IMR-90 (cell line): ENCODE measurements at regions of chr5 and their contacts with region 1.

Region 1: GRCh38 chr5:171418316-171418981 is 998 bp upstream of the FGF18 start:
- DNase-seq: peak; percentile 82
- ATAC-seq: peak; percentile 89
- H3K4me3 ChIP-seq: peak overlapping the region; percentile 3; the same call in 1 of the 2 replicates
- H3K27ac ChIP-seq: no peak overlapping the region
- H3K4me1 ChIP-seq: peaks cover 2% of the 10 kb centered on the region; the same call in 1 of the 2 replicates
- H3K27me3 ChIP-seq: no peaks in the 10 kb centered on the region; the same call in 1 of the 2 replicates
- CTCF ChIP-seq: peak; percentile 95
- POLR2A ChIP-seq: peak; percentile 39; the same call in 1 of the 2 replicates
- RAD21 ChIP-seq: peak; percentile 95

Region 2: DNA sequence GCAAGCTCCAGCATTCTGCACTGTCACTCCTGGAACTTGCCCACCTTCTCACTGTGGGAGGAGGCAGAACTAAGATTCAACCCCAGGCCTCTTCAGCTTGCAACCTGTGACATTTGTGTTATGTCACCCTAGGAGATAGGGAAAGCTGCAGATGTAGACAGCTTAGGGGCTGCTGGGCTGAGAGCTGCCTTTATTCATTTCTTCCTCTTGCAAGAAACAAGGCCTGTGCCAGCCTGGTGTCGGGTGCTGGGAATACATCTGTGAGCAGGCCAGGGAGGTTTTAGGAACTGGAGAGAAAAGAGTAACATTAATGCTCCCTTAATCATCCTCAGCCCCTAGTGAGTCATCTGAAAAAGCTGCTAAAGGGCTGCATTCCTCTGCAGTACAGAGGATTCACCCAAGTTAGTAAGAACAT is 102.8 kb after region 1 on chr5:
- CTCF ChIA-PET with region 1: interaction called, 3 read pairs
- POLR2A ChIA-PET with region 1: no interaction called
- dilution Hi-C with region 1: no loop called
- in situ Hi-C with region 1: no loop called
- intact Hi-C with region 1: loop called (anchors 5 kb)
- DNase-seq: peak; percentile 92
- ATAC-seq: peak; percentile 95
- H3K4me3 ChIP-seq: no peak overlapping the region
- H3K27ac ChIP-seq: peak overlapping the region; percentile 81
- H3K4me1 ChIP-seq: peaks cover 23% of the 10 kb centered on the region
- H3K27me3 ChIP-seq: peaks cover 3% of the 10 kb centered on the region
- CTCF ChIP-seq: peak; percentile 20; the same call in 1 of the 2 replicates
- POLR2A ChIP-seq: no peak
- RAD21 ChIP-seq: peak; percentile 44

Region 3: GRCh38 chr5:171580502-171581265 is 162.2 kb after region 1 on chr5:
- CTCF ChIA-PET with region 1: no interaction called
- POLR2A ChIA-PET with region 1: no interaction called
- dilution Hi-C with region 1: no loop called
- in situ Hi-C with region 1: no loop called
- intact Hi-C with region 1: no loop called
- DNase-seq: peak; percentile 52
- ATAC-seq: peak; percentile 69
- H3K4me3 ChIP-seq: no peak overlapping the region
- H3K27ac ChIP-seq: no peak overlapping the region
- H3K4me1 ChIP-seq: no peaks in the 10 kb centered on the region
- H3K27me3 ChIP-seq: peaks cover 19% of the 10 kb centered on the region
- CTCF ChIP-seq: no peak
- POLR2A ChIP-seq: no peak
- RAD21 ChIP-seq: no peak

Region 4: DNA sequence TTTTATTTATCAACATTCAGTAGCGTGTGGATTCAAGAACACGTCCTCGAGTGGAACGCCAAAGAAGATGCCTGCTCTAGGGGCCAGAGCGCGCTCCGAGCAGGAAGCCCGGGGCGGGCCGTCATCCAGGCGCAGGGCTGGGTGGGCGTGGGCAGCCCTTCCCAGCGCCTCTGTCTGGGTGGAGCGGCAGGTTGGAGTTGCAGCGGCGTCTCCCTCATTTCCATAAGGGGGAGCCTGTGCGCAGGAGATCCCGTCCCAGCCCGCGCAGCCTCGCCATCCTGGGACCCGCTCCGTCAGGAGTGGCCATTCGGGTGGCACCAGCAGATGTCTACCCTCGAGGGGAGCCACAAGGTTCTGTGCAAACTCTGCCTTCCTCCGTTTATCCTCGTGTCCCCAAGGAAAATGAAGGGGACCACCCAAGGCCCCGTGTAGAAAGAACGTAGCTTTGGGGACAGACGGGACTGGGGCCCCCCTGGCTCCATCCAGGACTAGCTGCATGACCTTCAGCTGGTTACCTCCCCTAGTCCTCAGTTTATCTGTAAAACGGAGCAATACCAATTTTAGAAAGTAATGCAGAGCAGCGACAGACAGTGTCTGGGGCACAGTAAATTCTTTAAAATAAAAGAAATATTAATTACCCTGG is 211.7 kb after region 1 on chr5:
- CTCF ChIA-PET with region 1: interaction called, 3 read pairs
- POLR2A ChIA-PET with region 1: no interaction called
- dilution Hi-C with region 1: no loop called
- in situ Hi-C with region 1: no loop called
- intact Hi-C with region 1: loop called (anchors 1 kb)
- DNase-seq: peak; percentile 52
- ATAC-seq: peak; percentile 99
- H3K4me3 ChIP-seq: no peak overlapping the region
- H3K27ac ChIP-seq: no peak overlapping the region
- H3K4me1 ChIP-seq: no peaks in the 10 kb centered on the region
- H3K27me3 ChIP-seq: peaks cover 51% of the 10 kb centered on the region
- CTCF ChIP-seq: peak; percentile 63
- POLR2A ChIP-seq: no peak
- RAD21 ChIP-seq: peak; percentile 73

Region 5: DNA sequence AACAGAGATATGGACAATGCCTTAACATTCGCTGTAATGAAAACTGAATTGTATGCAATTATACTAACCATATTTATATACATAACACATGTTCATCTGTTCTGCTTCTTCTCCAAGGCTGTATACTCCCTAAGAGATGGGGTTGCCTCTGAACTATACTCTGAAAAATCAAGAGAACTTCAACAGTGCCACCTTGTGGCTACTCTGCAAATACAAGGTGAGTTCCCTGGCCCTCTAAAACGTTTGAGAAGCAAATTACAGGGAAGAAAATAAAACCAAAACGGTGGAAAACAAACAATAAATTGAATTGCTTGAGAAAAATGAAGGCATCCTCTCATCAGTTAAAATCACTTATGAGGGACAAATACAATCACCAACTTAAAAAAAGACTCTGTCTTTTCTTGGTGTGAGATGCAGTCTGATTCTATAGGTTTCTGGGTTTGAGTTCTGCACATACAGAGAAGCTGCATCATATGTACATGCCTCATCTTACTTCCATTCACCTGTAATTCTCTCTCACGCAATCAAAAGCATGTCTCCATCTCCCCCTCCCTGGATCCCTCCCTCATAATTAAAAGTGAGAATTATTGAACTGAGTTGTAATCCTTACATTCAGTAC is 489.4 kb after region 1 on chr5:
- CTCF ChIA-PET with region 1: interaction called, 13 read pairs
- POLR2A ChIA-PET with region 1: no interaction called
- dilution Hi-C with region 1: no loop called
- in situ Hi-C with region 1: loop called (anchors 5 kb)
- intact Hi-C with region 1: loop called (anchors 1 kb)
- DNase-seq: peak; percentile 72
- ATAC-seq: peak; percentile 92
- H3K4me3 ChIP-seq: no peak overlapping the region
- H3K27ac ChIP-seq: no peak overlapping the region
- H3K4me1 ChIP-seq: no peaks in the 10 kb centered on the region
- H3K27me3 ChIP-seq: no peaks in the 10 kb centered on the region
- CTCF ChIP-seq: peak; percentile 76
- POLR2A ChIP-seq: no peak
- RAD21 ChIP-seq: peak; percentile 75

Region 6: DNA sequence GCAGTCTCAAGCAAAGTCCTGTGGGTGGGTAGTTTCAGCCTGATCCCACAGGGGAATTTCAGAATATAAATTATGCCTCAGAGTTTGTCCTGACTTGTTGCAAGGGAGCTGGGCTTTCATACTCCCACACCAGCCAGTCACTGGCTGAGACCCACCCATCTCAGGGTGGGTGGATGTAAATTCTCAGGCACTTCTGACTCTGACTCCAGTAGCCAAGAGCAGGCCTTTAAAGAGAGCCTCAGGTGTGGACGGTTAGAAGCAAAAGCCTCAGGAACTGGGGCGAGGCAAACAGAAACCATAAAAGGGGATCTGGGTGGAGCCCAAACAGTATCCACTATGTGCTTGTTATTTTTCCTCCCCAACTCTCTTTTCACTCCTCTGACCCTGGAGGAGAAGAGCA is 616.6 kb after region 1 on chr5:
- CTCF ChIA-PET with region 1: no interaction called
- POLR2A ChIA-PET with region 1: no interaction called
- dilution Hi-C with region 1: no loop called
- in situ Hi-C with region 1: loop called (anchors 10 kb)
- intact Hi-C with region 1: loop called (anchors 2 kb)
- DNase-seq: no peak
- ATAC-seq: no peak
- H3K4me3 ChIP-seq: no peak overlapping the region
- H3K27ac ChIP-seq: no peak overlapping the region
- H3K4me1 ChIP-seq: no peaks in the 10 kb centered on the region
- H3K27me3 ChIP-seq: no peaks in the 10 kb centered on the region
- CTCF ChIP-seq: no peak
- POLR2A ChIP-seq: no peak
- RAD21 ChIP-seq: no peak

Region 7: DNA sequence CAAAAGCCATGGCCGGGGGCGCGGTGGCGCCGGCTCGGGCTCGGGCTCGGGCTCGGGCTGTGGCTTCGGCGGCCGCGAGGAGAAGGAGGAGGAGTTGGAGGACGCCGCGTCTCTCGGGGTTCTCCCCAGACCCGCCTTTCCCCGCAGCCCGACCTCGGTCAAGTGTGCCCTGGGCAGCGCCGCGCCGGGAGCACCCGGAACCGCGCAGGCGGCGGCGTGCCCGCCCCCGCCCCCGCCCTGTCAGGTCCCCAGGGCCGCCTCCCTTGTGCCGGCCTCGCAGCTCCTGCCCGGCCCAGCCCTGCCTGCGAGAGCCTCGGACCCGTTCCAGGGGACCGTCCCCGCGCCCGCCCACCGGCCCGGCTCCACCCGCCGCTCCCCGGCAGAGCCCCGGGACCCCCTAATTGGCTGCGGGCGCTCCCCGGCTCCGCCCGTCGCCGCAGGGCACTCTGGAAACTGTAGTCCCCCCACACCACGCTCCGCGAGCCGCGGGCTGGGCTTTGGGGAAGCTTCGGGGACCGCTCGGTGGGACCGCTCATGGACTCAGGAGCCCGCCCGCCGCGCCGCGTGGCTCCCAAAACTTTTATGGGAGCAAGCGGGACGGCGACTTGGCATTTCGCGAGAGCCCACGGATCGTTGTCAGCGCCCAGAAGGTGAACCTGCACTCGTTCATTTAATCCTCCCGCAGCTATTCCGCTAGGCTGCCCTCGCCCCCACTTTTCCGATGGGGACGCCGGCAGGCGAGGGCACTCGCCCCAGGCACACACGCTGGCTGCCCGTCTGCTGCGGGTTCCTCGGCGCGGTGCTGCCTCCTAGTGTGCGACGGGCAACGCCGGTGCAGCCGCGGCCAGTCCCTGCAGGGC is 769.8 kb after region 1 on chr5 and contains the start of gene STK10:
- CTCF ChIA-PET with region 1: no interaction called
- POLR2A ChIA-PET with region 1: no interaction called
- dilution Hi-C with region 1: no loop called
- in situ Hi-C with region 1: loop called (anchors 25 kb)
- intact Hi-C with region 1: loop called (anchors 5 kb)
- DNase-seq: peak; percentile 87
- ATAC-seq: peak; percentile 90
- H3K4me3 ChIP-seq: peak within 1 kb of the TSS; percentile 98
- H3K27ac ChIP-seq: peak within 1 kb of the TSS; percentile 88
- H3K4me1 ChIP-seq: peaks cover 11% of the 10 kb centered on the region
- H3K27me3 ChIP-seq: no peaks in the 10 kb centered on the region
- CTCF ChIP-seq: peak; percentile 92
- POLR2A ChIP-seq: 0 out of 2 replicates have a peak, but pooled peaks have one; percentile 17
- RAD21 ChIP-seq: peak; percentile 96
- total RNA-seq, gene STK10: 15.4 and 16.4 TPM in 2 replicates